ENCODE measurements at regions of chr14 and their contacts with region 1.

Region 1: DNA sequence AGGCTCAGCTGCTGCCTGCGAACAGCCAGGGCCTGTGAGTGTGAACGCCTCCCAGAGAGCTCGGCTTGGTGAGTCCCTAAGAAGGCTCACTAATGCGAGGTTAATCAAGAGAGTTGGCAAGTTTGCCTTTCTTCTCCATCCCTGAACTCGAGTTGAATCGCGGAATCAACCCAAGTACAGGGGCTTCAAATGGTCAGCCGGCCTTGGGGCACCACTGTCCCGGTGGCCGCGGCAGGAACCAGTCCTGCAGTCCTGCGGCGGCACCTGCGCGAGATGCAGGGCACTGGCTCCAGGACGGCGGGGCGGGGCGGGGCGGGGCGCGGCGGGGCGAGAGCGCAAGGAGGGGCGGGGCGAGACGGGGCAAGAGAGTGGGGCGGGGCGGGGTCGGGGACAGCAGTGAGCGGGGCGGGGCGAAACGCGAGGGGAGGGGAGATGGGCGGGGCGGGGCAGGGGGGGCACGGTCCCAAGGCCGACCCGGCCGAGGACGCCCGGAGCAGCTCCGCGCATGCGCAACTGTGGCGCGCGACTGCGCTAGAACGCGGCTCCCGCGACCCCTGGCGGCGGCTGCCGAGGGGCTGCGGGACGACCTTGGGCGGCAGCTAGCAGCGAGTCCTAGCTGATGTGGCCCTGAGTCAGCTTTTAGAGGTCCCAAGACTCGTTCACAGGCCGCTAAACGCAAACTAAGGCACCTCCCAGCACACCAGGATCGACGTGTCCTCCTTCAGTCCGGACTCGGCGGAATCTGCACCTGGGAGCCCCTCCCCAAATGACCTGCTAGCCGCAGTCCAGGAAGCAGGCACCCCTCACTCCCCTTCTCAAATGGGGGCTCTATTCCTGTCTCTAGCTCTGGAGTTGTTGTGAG is 58.0 kb downstream of the TTC7B start:
- DNase-seq: peak; percentile 97

Region 2: GRCh38 chr14:90301668-90302090 is 456.6 kb before region 1 on chr14:
- intact Hi-C with region 1: loop called (anchors 5 kb)
- DNase-seq: no peak

Region 3: GRCh38 chr14:90697577-90698206 is 60.6 kb before region 1 on chr14:
- intact Hi-C with region 1: loop called (anchors 5 kb)
- DNase-seq: peak; percentile 93

Region 4: DNA sequence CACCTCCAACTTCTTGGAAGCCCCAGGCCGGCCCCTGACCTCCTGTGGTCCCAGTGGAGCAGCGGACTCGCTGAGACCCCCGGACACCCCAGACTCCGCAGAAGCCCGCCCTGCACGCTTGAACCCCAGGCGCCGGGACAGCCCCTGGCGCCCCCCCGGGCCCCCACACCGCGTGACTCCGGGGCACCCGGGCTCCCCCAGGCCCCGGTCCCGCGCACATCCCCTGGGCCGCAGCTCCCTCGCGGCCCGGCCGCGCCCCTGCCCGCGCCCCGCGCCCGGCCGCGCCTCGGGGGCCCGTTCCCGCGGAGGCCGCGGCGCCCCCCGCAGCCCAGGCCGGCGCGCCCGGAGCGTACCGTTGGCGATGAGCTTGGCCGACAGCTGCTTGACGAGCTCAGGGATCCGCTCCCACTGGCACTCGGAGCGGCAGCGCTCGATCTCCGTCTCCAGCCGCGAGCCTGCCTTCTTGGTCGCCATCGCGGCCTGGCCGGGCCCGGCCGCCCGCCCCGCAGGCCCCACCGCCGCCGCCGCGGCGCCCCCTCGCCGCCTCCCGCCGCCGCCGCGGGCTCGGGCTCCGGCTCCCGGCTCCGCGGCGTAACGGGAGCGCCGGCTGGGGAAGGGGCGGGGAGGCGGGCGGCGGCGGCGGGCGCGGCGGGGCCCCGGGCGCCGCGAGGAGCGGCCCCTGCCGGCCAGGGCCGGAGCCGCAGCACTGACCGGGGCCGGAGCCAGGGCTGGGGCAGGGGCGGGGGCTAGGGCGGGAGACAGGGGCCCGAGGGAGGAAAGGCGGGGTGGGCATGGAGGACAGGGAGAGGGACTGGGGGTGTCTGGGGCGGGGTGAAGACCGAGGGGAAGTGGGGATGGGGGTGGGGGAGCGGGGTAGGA is 57.8 kb after region 1 on chr14 and contains the start of gene TTC7B:
- intact Hi-C with region 1: loop called (anchors 1 kb)
- DNase-seq: no peak
- total RNA-seq, gene TTC7B: 64.9 TPM

Region 5: DNA sequence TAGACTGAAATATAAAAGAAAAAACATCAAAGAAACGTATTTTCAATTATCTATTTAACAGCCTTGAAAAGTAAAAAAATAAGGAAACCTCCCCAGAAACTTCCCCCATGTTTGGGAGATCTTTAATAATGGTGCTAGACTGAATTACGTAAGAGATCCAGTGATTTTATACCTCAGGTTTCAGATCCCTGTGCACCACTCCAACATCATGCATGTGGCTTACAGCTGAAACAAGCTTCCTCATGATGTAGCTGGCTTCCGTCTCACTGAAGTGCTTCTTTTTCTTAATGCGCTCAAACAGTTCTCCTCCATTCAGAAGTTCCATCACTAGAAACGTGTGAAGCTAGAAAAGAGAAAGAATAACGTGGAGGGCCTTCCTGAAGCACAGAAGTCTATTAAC is 136.0 kb after region 1 on chr14:
- intact Hi-C with region 1: loop called (anchors 10 kb)
- DNase-seq: no peak

Measured in cardiac septum (tissue), 1 donor.